Adrenal gland (tissue), 19 donors: ENCODE measurements at regions of chr6 and their contacts with region 1.

Region 1: DNA sequence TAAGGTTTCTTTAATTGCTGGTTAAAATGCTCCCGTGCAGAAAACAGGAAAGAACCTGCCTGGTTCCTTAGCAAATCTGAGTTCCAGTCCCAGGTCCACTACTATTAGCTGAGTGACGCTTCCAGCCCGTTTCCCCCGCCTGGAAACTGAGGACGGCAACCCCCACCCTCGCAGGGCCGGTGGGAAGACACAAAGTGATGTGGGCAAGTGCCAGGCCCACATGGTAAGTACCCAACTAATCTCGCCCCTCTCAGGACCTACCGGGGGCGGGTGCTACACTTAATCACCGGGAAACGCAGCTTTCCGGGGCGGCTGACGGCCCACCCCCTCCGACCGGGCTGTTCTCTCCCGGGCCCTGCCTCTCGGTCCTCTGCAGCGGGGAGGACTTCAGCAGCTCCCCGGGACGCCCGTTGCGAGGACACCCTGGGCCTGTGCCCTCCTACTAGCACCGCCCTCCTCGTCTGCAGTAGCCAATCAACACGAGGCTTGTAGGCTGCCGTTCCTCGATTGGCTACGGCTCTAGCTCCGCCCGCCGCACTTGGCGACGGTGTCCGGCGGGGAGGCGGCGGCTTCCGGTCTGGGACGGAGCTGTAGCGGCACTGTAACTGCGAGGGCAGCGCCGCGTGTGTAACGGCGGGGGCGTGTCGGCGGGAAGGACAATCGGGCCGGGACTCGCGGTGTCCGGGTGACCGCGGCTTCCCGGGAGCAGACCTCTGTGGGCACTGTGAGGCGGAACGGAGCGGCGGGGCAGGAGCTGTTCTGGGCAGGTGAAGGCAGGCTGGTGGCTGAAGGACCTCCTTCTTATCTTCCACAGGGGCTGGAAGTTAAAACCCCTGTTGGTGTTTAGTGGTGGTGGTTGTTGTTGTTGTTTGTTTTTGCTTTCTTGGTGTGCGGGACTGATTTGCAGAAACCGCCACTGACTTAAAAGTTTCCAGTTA is at the start of gene ZBTB9:
- DNase-seq: peak; percentile 96 to 99 (median 98)
- H3K4me3 ChIP-seq: peak within 1 kb of the TSS; percentile 77 to 93 (median 90)
- H3K27ac ChIP-seq: peak within 1 kb of the TSS in 4 of 5 donors; percentile 52 to 89 (median 70)
- H3K4me1 ChIP-seq: peaks cover 5 to 14% of the 10 kb centered on the region in 2 donors
- H3K27me3 ChIP-seq: no peaks in the 10 kb centered on the region
- CTCF ChIP-seq: peak in 1 of 6 experiments; percentile 3
- POLR2A ChIP-seq: peak; percentile 59 to 84
- total RNA-seq, gene ZBTB9: 2.3 to 10.3 (median 7.3) TPM

Region 2: DNA sequence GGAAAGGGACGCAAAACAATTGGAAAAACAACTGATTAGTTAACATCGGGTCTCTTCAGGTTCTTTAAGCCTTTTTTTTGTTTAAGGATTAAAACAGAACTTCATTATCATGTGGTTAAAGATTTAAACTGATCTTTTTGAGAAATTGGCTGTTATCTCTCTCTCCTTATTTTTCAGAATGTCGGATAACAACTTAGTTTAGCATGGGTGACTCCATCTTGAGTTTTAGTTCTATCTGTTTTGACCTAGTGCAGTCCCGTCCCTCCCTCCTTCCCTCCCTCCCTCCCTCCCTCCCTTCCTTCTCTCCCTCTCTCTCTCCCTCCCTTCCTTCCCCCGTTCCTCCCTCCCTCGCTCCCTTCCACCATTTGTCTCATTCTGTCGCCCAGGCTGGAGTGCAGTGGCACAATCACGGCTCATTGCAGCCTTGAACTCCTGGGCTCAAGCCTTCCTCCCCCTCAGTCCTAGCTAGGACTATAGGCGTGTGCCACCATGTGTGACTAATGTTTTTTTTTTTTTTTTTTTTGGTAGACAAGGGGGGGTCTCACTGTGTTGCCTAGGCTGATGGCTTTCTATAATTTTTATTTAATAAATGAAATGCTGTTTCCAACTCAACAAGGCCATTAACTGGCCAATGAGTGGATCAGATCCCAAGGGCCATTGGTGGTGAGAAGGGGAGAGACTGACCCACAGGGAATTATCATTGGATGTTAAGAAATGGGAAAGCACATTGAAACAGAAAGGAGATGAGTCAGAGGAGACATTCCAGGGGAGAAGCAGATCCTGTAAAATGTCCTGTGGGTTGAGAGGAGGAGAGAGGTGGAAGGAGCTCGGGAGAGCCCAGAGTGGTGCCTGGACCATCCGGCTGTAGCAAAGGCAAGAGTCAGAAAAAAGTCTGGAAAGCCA is 112.2 kb after region 1 on chr6:
- intact Hi-C with region 1: loop called in 1 of 2 experiments (anchors 10 kb)
- DNase-seq: peak; percentile 73 to 93 (median 87)
- H3K4me3 ChIP-seq: no peak overlapping the region
- H3K27ac ChIP-seq: peak overlapping the region; percentile 48 to 73 (median 57)
- H3K4me1 ChIP-seq: peaks cover under 1 to 2% of the 10 kb centered on the region in 2 donors
- H3K27me3 ChIP-seq: no peaks in the 10 kb centered on the region
- CTCF ChIP-seq: no peak
- POLR2A ChIP-seq: no peak

Region 3: GRCh38 chr6:33652002-33652401 is 197.7 kb after region 1 on chr6:
- intact Hi-C with region 1: no loop called
- DNase-seq: no peak
- H3K4me3 ChIP-seq: no peak overlapping the region
- H3K27ac ChIP-seq: no peak overlapping the region
- H3K4me1 ChIP-seq: no peaks in the 10 kb centered on the region
- H3K27me3 ChIP-seq: no peaks in the 10 kb centered on the region
- CTCF ChIP-seq: no peak
- POLR2A ChIP-seq: no peak